Thyroid gland (tissue), 4 donors: ENCODE measurements at regions of chr11 and their contacts with region 1.

Region 1: GRCh38 chr11:62694455-62695167 is 5.3 kb upstream of the LRRN4CL start:
- DNase-seq: peak; percentile 75 to 78
- H3K4me3 ChIP-seq: no peak overlapping the region
- H3K27ac ChIP-seq: no peak overlapping the region
- H3K4me1 ChIP-seq: no peaks in the 10 kb centered on the region
- H3K27me3 ChIP-seq: no peaks in the 10 kb centered on the region
- CTCF ChIP-seq: peak in 5 of 6 experiments; percentile 45 to 79 (median 58)
- POLR2A ChIP-seq: no peak

Region 2: DNA sequence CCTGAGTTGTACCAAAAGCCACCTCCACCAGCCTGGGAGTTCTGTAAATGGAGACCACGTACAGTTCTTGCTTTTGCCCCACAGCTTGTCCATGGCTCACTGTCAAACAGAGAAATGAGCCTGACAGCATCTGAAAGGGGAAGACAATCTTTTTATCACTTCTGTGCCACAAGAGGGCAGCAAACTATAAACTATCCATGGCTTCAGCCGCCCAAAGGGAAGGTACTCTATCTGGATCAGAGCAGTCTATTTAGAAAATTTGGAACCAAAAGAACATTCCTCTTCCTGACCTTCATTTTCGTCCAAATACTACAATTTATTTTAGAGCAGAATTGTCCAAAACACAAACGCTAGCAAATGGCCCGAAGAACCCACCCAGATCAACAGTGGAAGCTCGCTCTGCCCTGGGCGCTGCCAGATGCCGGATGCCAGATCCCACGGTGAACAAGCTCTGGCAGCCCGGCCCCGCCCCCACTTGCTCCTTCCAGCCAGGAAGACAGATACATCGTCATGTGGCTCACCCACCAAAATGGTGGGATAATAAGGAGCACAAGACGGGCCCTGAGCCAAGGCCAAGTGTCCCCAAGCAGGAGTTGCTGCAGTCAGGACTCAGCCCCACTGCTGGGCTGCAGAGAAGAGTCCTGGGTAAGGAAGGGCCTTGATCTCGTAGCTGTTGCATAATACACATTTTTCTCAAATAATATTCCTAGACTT is 299.6 kb before region 1 on chr11:
- intact Hi-C with region 1: loop called (anchors 10 kb)
- DNase-seq: peak; percentile 85 to 89
- H3K4me3 ChIP-seq: no peak overlapping the region
- H3K27ac ChIP-seq: peak overlapping the region; percentile 34 to 61 (median 46)
- H3K4me1 ChIP-seq: peaks cover 0 to 11% of the 10 kb centered on the region in 2 donors
- H3K27me3 ChIP-seq: no peaks in the 10 kb centered on the region
- CTCF ChIP-seq: peak; percentile 50 to 83 (median 70)
- POLR2A ChIP-seq: no peak